ENCODE measurements at regions of chr4 and their contacts with region 1.

Region 1: GRCh38 chr4:185395956-185396723 is 416 bp upstream of the LRP2BP start:
- DNase-seq: peak; percentile 99
- H3K4me3 ChIP-seq: peak overlapping the region; percentile 69 to 90 (median 81)
- H3K27ac ChIP-seq: peak overlapping the region; percentile 99 to 100 (median 100)
- H3K4me1 ChIP-seq: peaks cover 18 to 50% (median 38%) of the 10 kb centered on the region in 4 donors
- H3K27me3 ChIP-seq: no peaks in the 10 kb centered on the region
- CTCF ChIP-seq: no peak
- EP300 ChIP-seq: no peak
- POLR2A ChIP-seq: peak; percentile 67

Region 2: GRCh38 chr4:185203486-185204237 is 192.5 kb before region 1 on chr4 and contains the start of gene CFAP97:
- intact Hi-C with region 1: loop called (anchors 5 kb)
- DNase-seq: peak; percentile 96
- H3K4me3 ChIP-seq: peak within 1 kb of the TSS; percentile 79 to 91 (median 88)
- H3K27ac ChIP-seq: peak within 1 kb of the TSS; percentile 98 to 99 (median 99)
- H3K4me1 ChIP-seq: peaks cover 16 to 40% (median 29%) of the 10 kb centered on the region in 4 donors
- H3K27me3 ChIP-seq: no peaks in the 10 kb centered on the region
- CTCF ChIP-seq: peak in 1 of 3 experiments; percentile 12
- EP300 ChIP-seq: no peak
- POLR2A ChIP-seq: peak; percentile 46
- total RNA-seq, gene CFAP97: 30.2 to 36.8 (median 35.1) TPM

Region 3: DNA sequence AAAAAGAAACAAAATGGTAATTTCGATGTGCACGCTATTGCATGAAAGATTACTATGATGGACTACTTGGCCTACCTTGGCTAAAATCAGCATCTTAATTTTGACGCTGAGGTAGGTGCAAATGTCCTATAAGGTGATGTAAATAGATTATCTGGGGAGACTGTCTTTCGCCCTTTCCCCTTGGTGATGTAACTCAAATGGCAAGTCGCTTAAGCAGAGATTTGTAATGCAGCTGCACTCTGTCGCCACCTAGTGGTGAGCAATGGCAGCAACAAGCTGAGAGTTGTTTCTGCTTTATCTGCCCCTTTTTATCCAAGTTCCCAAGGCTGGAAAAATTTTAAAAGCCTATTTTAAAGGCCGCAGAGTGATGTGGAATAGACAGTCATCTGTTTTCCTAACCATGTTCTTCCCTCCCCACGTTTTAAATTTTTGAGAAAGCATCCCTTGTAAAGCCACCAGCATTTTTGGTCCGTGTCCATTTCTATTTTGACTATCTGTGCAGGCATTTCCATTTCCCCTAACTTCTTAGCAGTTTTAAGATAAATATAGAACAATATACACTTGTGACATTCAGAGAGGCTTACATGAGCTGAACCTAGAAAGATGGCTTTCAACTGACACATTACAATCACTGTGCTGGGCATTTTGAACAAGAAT is 201.5 kb after region 1 on chr4:
- intact Hi-C with region 1: loop called (anchors 10 kb)
- DNase-seq: peak; percentile 95
- H3K4me3 ChIP-seq: no peak overlapping the region
- H3K27ac ChIP-seq: peak overlapping the region; percentile 60 to 73 (median 68)
- H3K4me1 ChIP-seq: peaks cover 15 to 43% (median 38%) of the 10 kb centered on the region in 4 donors
- H3K27me3 ChIP-seq: no peaks in the 10 kb centered on the region
- CTCF ChIP-seq: peak; percentile 98 to 100 (median 99)
- EP300 ChIP-seq: no peak
- POLR2A ChIP-seq: no peak

Measured in esophagus muscularis mucosa (tissue), 4 donors.